Ovary (tissue), 10 donors: ENCODE measurements at regions of chr10 and their contacts with region 1.

Region 1: DNA sequence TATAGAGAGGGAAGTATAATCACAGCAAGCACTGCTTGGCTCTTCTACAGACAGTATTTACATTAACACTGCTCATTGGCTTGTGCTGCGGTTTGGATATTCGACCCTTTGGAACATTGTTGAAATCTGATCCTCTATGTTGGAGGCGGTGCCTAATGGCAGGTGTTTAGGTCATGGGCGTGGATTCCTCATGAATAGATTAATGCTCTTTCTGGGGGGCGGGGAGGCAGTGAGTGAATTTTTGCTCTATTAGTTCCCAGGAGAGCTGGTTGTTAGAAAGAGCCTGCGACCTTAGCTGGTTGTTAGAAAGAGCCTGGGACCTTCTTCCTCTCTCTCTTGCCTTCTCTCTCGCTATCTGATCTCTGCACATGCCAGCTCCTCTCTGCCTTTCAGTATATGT is 77.3 kb upstream of the SVIL start:
- DNase-seq: no peak
- H3K4me3 ChIP-seq: no peak overlapping the region
- H3K27ac ChIP-seq: no peak overlapping the region
- H3K4me1 ChIP-seq: peaks cover 2% of the 10 kb centered on the region
- H3K27me3 ChIP-seq: no peaks in the 10 kb centered on the region
- CTCF ChIP-seq: no peak
- EP300 ChIP-seq: no peak
- POLR2A ChIP-seq: no peak

Region 2: GRCh38 chr10:29229258-29229705 is 482.8 kb before region 1 on chr10:
- intact Hi-C with region 1: loop called in 1 of 4 experiments (anchors 5 kb)
- DNase-seq: no peak
- H3K4me3 ChIP-seq: no peak overlapping the region
- H3K27ac ChIP-seq: no peak overlapping the region
- H3K4me1 ChIP-seq: no peaks in the 10 kb centered on the region
- H3K27me3 ChIP-seq: no peaks in the 10 kb centered on the region
- CTCF ChIP-seq: no peak
- EP300 ChIP-seq: no peak
- POLR2A ChIP-seq: no peak

Region 3: GRCh38 chr10:29608062-29608461 is 104.0 kb before region 1 on chr10:
- intact Hi-C with region 1: no loop called
- DNase-seq: peak in 1 of 5 donors; percentile 23
- H3K4me3 ChIP-seq: no peak overlapping the region
- H3K27ac ChIP-seq: no peak overlapping the region
- H3K4me1 ChIP-seq: peaks cover 22% of the 10 kb centered on the region
- H3K27me3 ChIP-seq: no peaks in the 10 kb centered on the region
- CTCF ChIP-seq: no peak
- EP300 ChIP-seq: no peak
- POLR2A ChIP-seq: no peak

Region 4: DNA sequence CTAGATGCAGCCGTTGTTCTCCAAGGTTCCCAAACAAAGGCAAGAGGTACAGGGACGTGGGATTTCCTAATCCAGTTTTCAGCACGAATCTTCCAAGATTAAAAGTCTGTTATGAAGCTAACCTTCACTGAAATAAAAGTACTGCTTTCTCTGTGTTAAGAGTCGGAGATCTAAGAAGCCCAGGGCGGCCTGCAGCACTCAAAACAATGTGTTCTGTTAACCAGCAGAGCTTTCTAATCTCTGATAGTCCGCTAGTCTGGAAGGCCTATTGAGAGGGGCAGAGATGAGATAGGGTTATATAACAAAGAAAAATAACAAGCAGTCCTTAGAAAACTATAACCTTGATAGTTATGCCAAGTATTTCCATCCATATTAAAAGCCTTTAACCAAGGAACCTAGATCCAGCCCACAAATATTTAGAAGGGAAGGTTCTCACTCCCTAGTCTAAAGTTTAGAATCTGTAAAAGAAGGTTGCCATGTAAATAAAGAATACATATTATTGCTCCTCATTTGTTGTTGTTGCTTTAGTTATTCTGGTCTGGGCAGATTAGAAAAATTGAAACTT is 29.0 kb after region 1 on chr10:
- intact Hi-C with region 1: loop called in 1 of 4 experiments (anchors 2 kb)
- DNase-seq: peak in 3 of 5 donors; percentile 47 to 71 (median 54)
- H3K4me3 ChIP-seq: no peak overlapping the region
- H3K27ac ChIP-seq: peak overlapping the region in 1 of 2 donors; percentile 83
- H3K4me1 ChIP-seq: peaks cover 5% of the 10 kb centered on the region
- H3K27me3 ChIP-seq: no peaks in the 10 kb centered on the region
- CTCF ChIP-seq: no peak
- EP300 ChIP-seq: no peak
- POLR2A ChIP-seq: no peak